ENCODE measurements at regions of chr12 and their contacts with region 1.

Region 1: DNA sequence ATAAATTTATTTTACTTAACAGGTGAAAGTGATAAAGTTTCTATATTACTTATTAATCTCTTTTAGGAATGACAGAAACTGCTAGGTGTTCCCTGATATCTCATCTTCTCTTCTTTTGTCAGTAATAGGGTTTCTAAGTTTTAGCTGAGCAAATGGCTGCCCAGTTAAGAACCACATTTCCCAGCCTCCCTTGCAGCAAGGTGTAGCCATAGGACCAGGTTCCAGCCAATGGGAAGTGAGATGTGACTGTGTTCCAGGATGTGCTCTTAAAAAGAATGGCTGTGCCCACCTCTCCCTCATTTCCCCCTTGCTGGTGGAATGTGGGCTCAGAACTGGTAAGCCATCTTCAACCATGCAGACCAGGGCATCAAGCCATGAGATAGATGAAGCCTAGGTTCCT is 165.6 kb downstream of the HELB start:
- DNase-seq: peak; percentile 63
- H3K4me3 ChIP-seq: peak overlapping the region; percentile 41
- H3K27ac ChIP-seq: no peak overlapping the region
- H3K4me1 ChIP-seq: peaks cover 5% of the 10 kb centered on the region
- CTCF ChIP-seq: no peak

Region 2: GRCh38 chr12:66491853-66492252 is 23.9 kb after region 1 on chr12:
- CTCF ChIA-PET with region 1: no interaction called
- POLR2A ChIA-PET with region 1: interaction called, 10 read pairs
- intact Hi-C with region 1: no loop called
- DNase-seq: no peak
- H3K4me3 ChIP-seq: no peak overlapping the region
- H3K27ac ChIP-seq: no peak overlapping the region
- H3K4me1 ChIP-seq: peaks cover 11% of the 10 kb centered on the region
- CTCF ChIP-seq: no peak

Region 3: GRCh38 chr12:66497008-66497897 is 29.3 kb after region 1 on chr12:
- CTCF ChIA-PET with region 1: no interaction called
- POLR2A ChIA-PET with region 1: interaction called, 10 read pairs
- intact Hi-C with region 1: no loop called
- DNase-seq: no peak
- H3K4me3 ChIP-seq: no peak overlapping the region
- H3K27ac ChIP-seq: no peak overlapping the region
- H3K4me1 ChIP-seq: no peaks in the 10 kb centered on the region
- CTCF ChIP-seq: no peak

Measured in OCI-LY7 (cell line).